Common myeloid progenitor, CD34-positive (primary cell): ENCODE measurements at regions of chr9 and their contacts with region 1.

Region 1: GRCh38 chr9:89608651-89609345 is 4.0 kb downstream of the GADD45G start:
- DNase-seq: no peak
- H3K4me3 ChIP-seq: no peak overlapping the region
- H3K27ac ChIP-seq: no peak overlapping the region
- H3K4me1 ChIP-seq: peaks cover 12 to 39% (median 31%) of the 10 kb centered on the region in 4 experiments
- H3K27me3 ChIP-seq: peaks cover 0 to 7% (median 0%) of the 10 kb centered on the region in 5 experiments

Region 2: GRCh38 chr9:89623925-89624420 is 15.2 kb after region 1 on chr9:
- CTCF ChIA-PET with region 1: interaction called, 25 read pairs
- POLR2A ChIA-PET with region 1: interaction called, 6 read pairs
- DNase-seq: peak; percentile 62 to 92 (median 90)
- H3K4me3 ChIP-seq: peak overlapping the region in 1 of 7 experiments; percentile 2
- H3K27ac ChIP-seq: no peak overlapping the region
- H3K4me1 ChIP-seq: peaks cover 0 to 24% (median 19%) of the 10 kb centered on the region in 4 experiments
- H3K27me3 ChIP-seq: peaks cover 0 to 16% (median 6%) of the 10 kb centered on the region in 5 experiments

Region 3: GRCh38 chr9:89759572-89759971 is 150.8 kb after region 1 on chr9:
- CTCF ChIA-PET with region 1: no interaction called
- POLR2A ChIA-PET with region 1: no interaction called
- DNase-seq: peak in 2 of 3 donors; percentile 17 to 19
- H3K4me3 ChIP-seq: peak overlapping the region in 1 of 7 experiments; percentile 4
- H3K27ac ChIP-seq: no peak overlapping the region
- H3K4me1 ChIP-seq: peaks cover 0 to 8% (median 1%) of the 10 kb centered on the region in 4 experiments
- H3K27me3 ChIP-seq: no peaks in the 10 kb centered on the region